ENCODE measurements at regions of chr10 and their contacts with region 1.

Region 1: DNA sequence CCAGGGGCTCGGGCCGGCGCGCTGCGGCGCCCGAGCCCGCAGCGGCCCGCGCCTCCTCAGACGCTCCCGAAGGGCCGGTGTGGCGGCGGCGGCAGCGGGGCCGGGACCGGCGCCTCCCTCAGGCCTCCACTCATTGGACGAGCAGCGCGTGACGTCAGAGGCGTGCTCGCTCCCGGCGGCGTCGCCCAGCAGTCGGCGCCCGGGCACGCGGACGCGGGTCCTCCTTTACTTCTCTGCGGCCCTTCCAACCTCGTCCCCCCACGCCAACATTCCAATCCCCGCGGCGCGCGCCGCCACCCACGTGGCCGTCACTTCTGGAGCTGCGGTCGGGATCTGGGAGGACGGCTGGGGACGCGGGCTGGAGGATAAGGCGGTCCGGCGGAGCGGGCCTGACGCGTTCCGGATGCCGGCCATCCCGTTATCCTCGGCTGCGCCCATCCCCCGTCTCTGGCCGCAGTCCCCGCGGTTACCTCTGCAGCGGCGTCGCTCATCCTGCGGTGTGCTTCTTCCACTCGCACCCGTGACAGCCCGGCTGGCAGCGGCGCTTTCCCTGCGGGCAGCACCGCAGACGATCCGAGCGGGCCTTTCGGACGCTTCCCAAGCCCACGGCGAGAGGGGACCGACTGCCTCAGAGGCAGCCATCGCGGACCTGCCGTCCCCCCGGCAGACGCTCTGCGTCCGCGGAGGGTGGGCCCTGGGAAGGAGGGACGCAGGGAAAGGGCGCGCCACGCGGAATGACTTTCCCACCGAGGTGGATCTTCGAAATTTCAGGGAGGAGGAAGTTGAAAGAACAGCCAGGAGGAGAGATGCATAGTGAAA is at the start of gene PDZD8:
- DNase-seq: peak; percentile 47
- H3K4me3 ChIP-seq: peak within 1 kb of the TSS; percentile 90
- H3K27me3 ChIP-seq: peaks cover 4% of the 10 kb centered on the region
- CTCF ChIP-seq: no peak
- polyA plus RNA-seq, gene PDZD8: 13.6 and 22.0 TPM in 2 replicates

Region 2: DNA sequence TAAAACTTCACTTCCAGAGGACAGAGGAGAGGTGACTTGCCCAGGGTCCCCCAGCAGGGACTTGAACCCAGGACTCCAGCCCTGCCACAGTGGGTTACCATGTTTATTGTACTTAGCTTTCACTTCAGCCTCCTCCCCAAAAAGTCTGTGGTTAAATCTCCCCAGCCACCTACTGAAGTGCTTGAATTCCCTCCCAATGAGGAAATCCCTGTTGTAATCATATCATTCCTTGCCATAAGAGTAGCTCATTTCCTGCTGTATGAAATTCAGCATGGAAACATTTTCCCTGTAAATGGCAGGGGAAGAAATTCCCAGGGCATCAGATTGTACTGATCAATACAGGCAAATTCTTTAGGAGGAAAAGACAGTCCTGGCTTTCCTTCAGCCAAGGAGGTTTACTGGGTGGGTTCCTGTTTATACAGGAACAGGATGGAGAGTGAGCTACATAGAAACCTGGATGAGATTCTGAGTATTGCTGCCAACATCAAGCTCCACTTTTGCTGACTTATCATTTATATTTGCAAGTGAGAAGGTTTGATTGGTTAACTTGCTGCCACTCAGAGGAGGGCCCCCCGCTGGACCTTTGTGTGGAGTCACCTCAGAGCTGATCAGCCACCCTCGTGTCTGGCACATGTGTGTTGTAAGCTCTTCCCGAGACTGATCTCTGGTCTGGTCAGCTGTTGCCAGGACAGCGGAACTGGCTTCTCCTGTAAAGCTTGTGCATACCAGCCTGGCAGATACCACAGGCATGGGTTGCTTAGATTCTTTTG is 16.1 kb after region 1 on chr10:
- CTCF ChIA-PET with region 1: no interaction called
- POLR2A ChIA-PET with region 1: no interaction called
- DNase-seq: no peak
- H3K4me3 ChIP-seq: no peak overlapping the region
- H3K27me3 ChIP-seq: peaks cover 6% of the 10 kb centered on the region
- CTCF ChIP-seq: no peak

Region 3: DNA sequence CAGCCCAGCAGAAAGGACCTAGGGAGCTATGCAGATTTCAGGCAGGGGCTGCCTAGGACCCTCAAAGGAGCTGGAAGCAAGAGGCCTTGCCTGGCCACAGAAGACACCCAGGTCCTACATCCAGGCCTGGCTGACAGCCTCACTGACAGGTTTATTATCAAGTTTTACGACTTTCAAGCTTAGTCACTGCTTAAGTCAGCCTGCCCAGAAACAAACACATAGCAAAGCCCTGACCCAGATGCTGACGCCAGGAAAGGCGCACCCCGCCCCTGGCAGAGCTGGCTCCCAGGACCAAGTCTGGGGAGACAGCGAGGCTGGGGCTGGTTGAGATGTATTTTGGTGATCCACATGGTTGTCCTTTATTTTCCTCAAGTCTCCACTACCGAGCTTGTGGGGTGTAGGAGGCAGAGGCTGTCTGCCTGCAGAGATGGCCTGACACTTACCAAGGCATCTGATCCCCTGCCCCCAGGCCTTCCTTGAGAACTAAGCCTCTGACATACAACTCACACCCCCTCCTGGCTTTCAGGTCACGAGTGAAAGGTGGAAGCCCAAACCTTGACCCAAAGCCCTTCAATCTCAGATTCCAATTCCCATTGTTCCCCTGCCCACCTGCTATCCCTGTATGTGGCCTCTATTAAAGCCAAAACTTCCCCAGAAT is 86.3 kb after region 1 on chr10:
- CTCF ChIA-PET with region 1: no interaction called
- POLR2A ChIA-PET with region 1: interaction called, 12 read pairs
- DNase-seq: peak; percentile 98
- H3K4me3 ChIP-seq: no peak overlapping the region
- H3K27me3 ChIP-seq: no peaks in the 10 kb centered on the region
- CTCF ChIP-seq: no peak